ENCODE measurements at regions of chr19 and their contacts with region 1.

Region 1: DNA sequence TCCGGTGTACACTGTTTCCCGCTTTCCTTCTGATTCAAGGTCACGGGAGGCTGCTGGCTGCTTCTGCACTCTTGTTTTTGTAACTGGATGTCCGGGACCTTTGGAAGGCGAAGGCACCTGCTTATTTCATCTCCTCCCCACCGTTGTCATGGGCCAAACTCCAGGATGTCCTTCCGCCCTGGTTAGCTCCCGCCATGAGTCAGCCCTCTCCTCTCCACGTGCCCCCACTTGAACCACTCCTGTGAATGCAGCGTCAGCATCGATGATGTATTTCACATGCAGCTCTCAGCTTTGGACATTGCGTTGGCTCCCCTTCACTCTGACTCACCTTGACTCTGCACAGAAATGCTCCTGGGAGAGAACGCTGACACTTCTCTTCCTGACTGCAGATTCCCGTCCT is 5.5 kb upstream of the GALP start:
- DNase-seq: peak; percentile 73 to 94 (median 86)
- H3K4me3 ChIP-seq: no peak overlapping the region
- H3K27ac ChIP-seq: peak overlapping the region in 1 of 5 donors; percentile 30
- H3K4me1 ChIP-seq: peaks cover 0 to 4% of the 10 kb centered on the region in 2 donors
- H3K27me3 ChIP-seq: no peaks in the 10 kb centered on the region
- CTCF ChIP-seq: no peak
- POLR2A ChIP-seq: no peak

Region 2: DNA sequence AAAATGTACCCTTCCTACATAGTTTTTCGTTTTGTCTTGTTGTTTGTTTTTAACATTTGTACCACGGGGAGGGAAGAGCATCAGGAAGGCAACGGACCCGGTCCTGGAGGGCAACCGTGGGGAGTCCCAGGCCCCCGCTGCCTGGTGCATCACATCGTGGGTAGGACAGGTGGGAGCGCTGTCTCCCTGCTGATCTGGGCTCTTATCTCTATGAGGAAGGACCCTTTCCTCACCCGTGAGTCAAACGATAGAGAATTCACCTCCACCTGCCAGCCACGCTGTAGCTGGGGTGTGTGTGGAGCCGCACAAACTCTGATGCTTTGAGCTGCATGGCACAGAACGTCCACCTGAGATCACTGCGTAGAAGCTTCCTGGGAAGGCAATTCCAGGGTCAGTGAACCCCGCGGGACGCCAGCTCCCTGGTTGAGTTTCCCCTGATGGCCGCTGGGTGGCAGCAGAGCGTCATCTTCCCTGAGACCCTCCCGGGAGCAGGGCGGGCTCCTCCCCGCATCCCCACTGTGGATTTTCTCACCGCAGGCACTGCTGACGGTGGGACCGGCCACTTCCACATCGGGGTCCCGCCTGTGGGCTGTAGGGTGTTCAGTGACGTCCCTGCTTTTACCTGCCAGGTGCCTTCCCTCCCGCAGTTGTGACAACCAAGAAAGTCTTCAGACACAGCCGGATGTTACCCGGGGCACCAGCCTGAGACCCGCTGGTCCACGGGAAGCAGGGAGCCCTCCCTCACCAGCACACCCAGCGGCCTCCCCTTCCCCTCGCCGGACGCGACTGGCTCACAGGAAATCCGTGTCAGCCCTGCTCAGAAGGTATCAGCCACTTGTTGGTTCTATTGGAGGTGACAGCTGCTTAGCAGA is 103.9 kb before region 1 on chr19:
- intact Hi-C with region 1: no loop called
- DNase-seq: peak; percentile 59 to 84 (median 73)
- H3K4me3 ChIP-seq: no peak overlapping the region
- H3K27ac ChIP-seq: no peak overlapping the region
- H3K4me1 ChIP-seq: no peaks in the 10 kb centered on the region
- H3K27me3 ChIP-seq: no peaks in the 10 kb centered on the region
- CTCF ChIP-seq: peak; percentile 62 to 89 (median 77)
- POLR2A ChIP-seq: no peak

Region 3: DNA sequence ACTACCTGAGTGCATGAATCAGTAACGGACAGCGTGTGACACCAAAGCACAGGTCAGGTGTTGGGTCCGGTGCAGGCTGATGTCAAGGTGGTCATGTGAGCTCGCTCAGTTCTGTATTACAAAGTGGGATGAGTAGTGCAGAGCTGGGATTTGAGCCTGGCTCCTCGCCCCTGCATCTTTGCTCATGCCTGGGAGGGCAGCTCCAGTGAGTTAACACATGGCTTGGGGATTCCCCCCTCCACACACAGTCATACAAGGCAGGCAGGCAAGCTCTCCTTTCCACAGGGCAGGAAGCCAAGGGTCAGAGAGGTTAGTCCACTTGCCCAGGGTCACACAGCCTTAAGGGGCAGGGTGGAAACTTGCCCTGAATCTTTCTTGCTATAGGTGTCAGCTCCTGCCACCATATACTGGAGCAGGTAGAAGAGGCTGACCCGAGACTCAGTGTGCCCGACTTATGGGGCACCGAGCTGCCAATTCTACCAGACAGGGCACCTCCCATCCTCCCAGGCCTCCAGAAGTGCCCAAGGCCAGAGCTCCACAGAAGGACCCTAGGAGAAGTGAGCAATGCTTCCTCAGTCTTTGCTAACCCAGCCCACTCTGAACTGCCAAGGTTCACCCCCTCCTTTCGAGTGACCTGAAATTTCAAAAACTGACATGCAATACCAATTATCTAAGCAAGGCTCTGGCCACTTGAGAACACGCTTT is 84.5 kb before region 1 on chr19:
- intact Hi-C with region 1: loop called in 1 of 2 experiments (anchors 5 kb)
- DNase-seq: peak; percentile 53 to 86 (median 74)
- H3K4me3 ChIP-seq: no peak overlapping the region
- H3K27ac ChIP-seq: peak overlapping the region in 2 of 5 donors; percentile 65 to 67
- H3K4me1 ChIP-seq: peaks cover 20 to 29% of the 10 kb centered on the region in 2 donors
- H3K27me3 ChIP-seq: no peaks in the 10 kb centered on the region
- CTCF ChIP-seq: no peak
- POLR2A ChIP-seq: no peak

Measured in adrenal gland (tissue), 19 donors.